CD8-positive, alpha-beta memory T cell (primary cell): ENCODE measurements at regions of chr10 and their contacts with region 1.

Region 1: GRCh38 chr10:6088721-6089390 is at the start of gene RBM17:
- DNase-seq: peak; percentile 93 to 99 (median 98)
- H3K4me3 ChIP-seq: peak within 1 kb of the TSS; percentile 91
- H3K4me3 Mint-ChIP-seq: peak within 1 kb of the TSS; percentile 85 to 96 (median 92)
- H3K27ac ChIP-seq: peak within 1 kb of the TSS; percentile 79
- H3K27ac Mint-ChIP-seq: peak within 1 kb of the TSS; percentile 67 to 94 (median 88)
- H3K4me1 ChIP-seq: peaks cover 50% of the 10 kb centered on the region
- H3K4me1 Mint-ChIP-seq: peaks cover 50 to 63% (median 58%) of the 10 kb centered on the region in 3 donors
- H3K27me3 ChIP-seq: no peaks in the 10 kb centered on the region
- H3K27me3 Mint-ChIP-seq: peaks cover 0 to 3% of the 10 kb centered on the region in 2 donors
- total RNA-seq, gene RBM17: 269 to 282 TPM

Region 2: GRCh38 chr10:5977471-5978229 is 111.2 kb before region 1 on chr10 and contains the start of gene IL15RA:
- CTCF ChIA-PET with region 1: interaction called, 11 read pairs
- POLR2A ChIA-PET with region 1: interaction called, 6 read pairs
- DNase-seq: peak; percentile 74 to 92 (median 80)
- H3K4me3 ChIP-seq: peak within 1 kb of the TSS; percentile 86
- H3K4me3 Mint-ChIP-seq: peak within 1 kb of the TSS; percentile 96 to 99 (median 98)
- H3K27ac ChIP-seq: peak within 1 kb of the TSS; percentile 89
- H3K27ac Mint-ChIP-seq: peak within 1 kb of the TSS; percentile 91 to 98 (median 96)
- H3K4me1 ChIP-seq: peaks cover 16% of the 10 kb centered on the region
- H3K4me1 Mint-ChIP-seq: peaks cover 24 to 45% (median 40%) of the 10 kb centered on the region in 3 donors
- H3K27me3 ChIP-seq: no peaks in the 10 kb centered on the region
- H3K27me3 Mint-ChIP-seq: no peaks in the 10 kb centered on the region
- total RNA-seq, gene IL15RA: 30.1 to 33.5 TPM

Region 3: DNA sequence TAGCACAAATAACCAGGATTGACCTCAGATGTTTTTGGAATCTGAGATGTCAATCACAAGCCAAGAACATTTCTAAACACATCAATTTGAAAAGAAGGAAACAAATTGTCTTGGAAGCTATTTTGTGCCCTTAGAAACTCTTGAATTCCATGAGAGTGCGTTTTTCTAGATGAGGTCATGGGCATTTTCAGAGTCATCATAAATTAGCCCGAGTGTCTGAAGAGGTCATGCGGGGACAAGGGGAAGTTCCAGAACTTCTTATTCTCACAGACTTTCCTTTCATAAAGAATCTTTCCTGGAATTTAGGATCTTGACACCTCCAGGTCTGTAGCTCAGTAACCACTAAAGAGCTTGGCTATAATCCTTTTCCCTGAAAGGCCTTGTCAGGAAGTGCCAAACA is 54.9 kb before region 1 on chr10:
- CTCF ChIA-PET with region 1: interaction called, 18 read pairs
- POLR2A ChIA-PET with region 1: interaction called, 5 read pairs
- DNase-seq: no peak
- H3K4me3 ChIP-seq: no peak overlapping the region
- H3K4me3 Mint-ChIP-seq: no peak overlapping the region
- H3K27ac ChIP-seq: peak overlapping the region; percentile 46
- H3K27ac Mint-ChIP-seq: no peak overlapping the region
- H3K4me1 ChIP-seq: peaks cover 32% of the 10 kb centered on the region
- H3K4me1 Mint-ChIP-seq: peaks cover 33 to 42% (median 39%) of the 10 kb centered on the region in 3 donors
- H3K27me3 ChIP-seq: no peaks in the 10 kb centered on the region
- H3K27me3 Mint-ChIP-seq: no peaks in the 10 kb centered on the region

Region 4: DNA sequence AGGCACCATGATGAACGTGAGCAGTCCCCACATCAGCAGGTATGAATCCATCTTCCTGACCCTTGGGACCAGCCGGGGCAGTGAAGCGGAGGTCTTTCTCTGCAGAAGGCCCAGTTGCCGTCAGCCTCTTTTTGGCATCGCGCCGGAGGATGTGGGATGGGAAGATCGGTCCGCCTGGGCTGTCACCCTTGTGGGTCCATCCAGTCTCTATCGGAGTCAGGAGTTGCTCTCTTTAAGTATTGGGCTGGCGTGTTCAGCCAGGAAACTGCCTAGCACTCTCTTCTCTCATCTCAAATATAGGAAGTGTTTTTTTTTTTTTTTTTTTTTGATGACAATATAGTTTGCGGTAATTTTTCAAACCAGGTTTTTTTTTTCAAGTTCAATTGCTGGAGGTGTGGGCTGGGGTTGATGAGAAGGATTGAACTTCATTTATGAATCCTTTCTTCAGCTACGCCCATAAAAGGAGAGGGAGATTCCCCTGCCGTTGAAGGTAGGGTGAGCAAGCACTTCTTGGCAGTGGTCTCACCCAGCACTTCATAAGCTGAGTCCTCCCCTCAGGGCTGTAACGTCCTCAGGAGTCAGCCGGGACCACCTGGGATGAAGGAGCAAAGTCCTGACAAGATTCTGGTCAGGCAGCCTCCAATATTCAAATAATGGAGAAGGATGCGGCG is 26.6 kb before region 1 on chr10 and contains the start of gene IL2RA:
- CTCF ChIA-PET with region 1: interaction called, 24 read pairs
- POLR2A ChIA-PET with region 1: no interaction called
- DNase-seq: peak; percentile 30 to 73 (median 65)
- H3K4me3 ChIP-seq: peak within 1 kb of the TSS; percentile 66
- H3K4me3 Mint-ChIP-seq: peak within 1 kb of the TSS; percentile 90 to 94 (median 92)
- H3K27ac ChIP-seq: peak within 1 kb of the TSS; percentile 32
- H3K27ac Mint-ChIP-seq: peak within 1 kb of the TSS; percentile 41 to 94 (median 88)
- H3K4me1 ChIP-seq: peaks cover 50% of the 10 kb centered on the region
- H3K4me1 Mint-ChIP-seq: peaks cover 47 to 81% (median 78%) of the 10 kb centered on the region in 3 donors
- H3K27me3 ChIP-seq: no peaks in the 10 kb centered on the region
- H3K27me3 Mint-ChIP-seq: peaks cover 0 to 8% of the 10 kb centered on the region in 2 donors
- total RNA-seq, gene IL2RA: 1,178 to 1,224 TPM

Region 5: GRCh38 chr10:6128087-6128486 is 39.2 kb after region 1 on chr10:
- CTCF ChIA-PET with region 1: no interaction called
- POLR2A ChIA-PET with region 1: no interaction called
- DNase-seq: no peak
- H3K4me3 ChIP-seq: no peak overlapping the region
- H3K4me3 Mint-ChIP-seq: no peak overlapping the region
- H3K27ac ChIP-seq: no peak overlapping the region
- H3K27ac Mint-ChIP-seq: peak overlapping the region in 2 of 8 donors; percentile 58 to 66
- H3K4me1 ChIP-seq: peaks cover 8% of the 10 kb centered on the region
- H3K4me1 Mint-ChIP-seq: peaks cover 16 to 22% (median 21%) of the 10 kb centered on the region in 3 donors
- H3K27me3 ChIP-seq: no peaks in the 10 kb centered on the region
- H3K27me3 Mint-ChIP-seq: peaks cover 4% of the 10 kb centered on the region in 2 donors

Region 6: DNA sequence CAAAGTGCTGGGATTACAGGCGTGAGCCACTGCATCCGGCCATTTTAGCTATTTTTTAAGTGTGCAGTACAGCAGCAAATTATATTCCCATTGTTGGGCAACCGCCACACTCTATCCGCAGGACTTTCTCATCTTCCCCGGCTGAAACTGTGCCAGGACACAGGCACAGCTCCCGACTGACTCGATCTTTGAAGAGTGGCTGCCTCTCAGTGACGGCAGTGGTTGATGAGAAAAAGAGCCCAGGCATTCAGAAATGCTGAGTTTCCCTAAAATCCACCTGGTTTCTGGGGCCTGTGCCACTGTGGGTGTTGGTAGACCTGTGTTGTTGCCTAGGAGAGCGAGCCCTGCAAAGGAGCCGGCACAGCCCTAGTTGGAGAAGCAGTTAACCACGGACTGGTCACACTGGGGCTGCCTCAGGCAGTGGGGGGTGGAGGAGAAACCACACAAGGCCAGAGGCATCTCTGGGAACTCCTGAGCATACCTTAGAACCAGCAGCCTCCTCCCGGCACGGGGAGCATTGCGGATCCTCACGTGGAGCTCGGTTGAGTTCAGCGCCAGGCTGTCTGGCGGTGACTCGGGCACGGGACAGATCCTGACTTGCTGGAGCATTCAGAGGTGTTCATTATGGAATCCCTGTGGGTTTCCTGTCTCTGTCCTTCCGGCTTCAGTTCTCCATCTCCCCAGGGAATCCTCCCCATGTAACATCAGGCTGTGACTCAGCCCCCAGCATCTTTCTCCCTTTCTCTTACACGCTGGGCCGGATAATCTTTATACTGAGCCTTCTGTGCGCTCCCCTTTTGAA is 130.0 kb after region 1 on chr10:
- CTCF ChIA-PET with region 1: no interaction called
- POLR2A ChIA-PET with region 1: no interaction called
- DNase-seq: no peak
- H3K4me3 ChIP-seq: no peak overlapping the region
- H3K4me3 Mint-ChIP-seq: no peak overlapping the region
- H3K27ac ChIP-seq: no peak overlapping the region
- H3K27ac Mint-ChIP-seq: no peak overlapping the region
- H3K4me1 ChIP-seq: no peaks in the 10 kb centered on the region
- H3K4me1 Mint-ChIP-seq: peaks cover under 1 to 4% (median 3%) of the 10 kb centered on the region in 3 donors
- H3K27me3 ChIP-seq: no peaks in the 10 kb centered on the region
- H3K27me3 Mint-ChIP-seq: no peaks in the 10 kb centered on the region

Region 7: DNA sequence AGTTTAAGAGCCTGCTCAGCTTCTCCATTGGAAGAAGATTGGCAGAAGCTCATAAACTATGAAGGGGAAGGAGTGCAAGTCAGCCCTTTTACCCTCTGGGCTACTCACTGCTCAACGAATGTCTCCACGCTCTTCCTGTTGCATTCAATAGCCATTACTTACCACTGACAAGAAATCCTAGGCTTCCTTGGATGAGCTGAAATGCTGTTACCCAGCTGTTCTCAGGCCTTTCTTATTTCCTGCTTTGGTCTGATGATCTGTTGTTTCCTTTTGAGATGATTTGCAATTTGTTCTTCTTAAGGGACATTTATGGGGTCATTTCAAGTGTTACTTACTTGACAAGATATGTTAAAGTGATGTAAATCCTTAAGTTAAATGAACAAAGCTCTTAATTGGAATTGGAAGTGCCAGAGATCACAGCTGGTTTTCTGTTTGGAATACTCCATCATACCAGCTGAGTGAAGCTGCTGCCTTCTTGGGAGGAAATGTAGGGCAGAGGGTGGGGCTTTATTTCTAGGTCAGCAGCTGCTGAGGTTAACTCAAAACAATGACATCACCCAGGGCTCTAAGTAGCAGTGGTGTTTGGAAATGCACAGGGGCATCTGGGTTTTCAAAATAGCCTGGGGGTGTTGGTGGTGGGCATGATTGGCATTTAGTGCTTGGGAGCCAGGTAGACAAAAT is 321.3 kb after region 1 on chr10:
- CTCF ChIA-PET with region 1: interaction called, 10 read pairs
- POLR2A ChIA-PET with region 1: no interaction called
- DNase-seq: peak; percentile 30 to 76 (median 47)
- H3K4me3 ChIP-seq: peak overlapping the region; percentile 16
- H3K4me3 Mint-ChIP-seq: peak overlapping the region; percentile 63 to 83 (median 79)
- H3K27ac ChIP-seq: peak overlapping the region; percentile 52
- H3K27ac Mint-ChIP-seq: peak overlapping the region; percentile 94 to 98 (median 96)
- H3K4me1 ChIP-seq: peaks cover 29% of the 10 kb centered on the region
- H3K4me1 Mint-ChIP-seq: peaks cover 26 to 50% (median 46%) of the 10 kb centered on the region in 3 donors
- H3K27me3 ChIP-seq: no peaks in the 10 kb centered on the region
- H3K27me3 Mint-ChIP-seq: peaks cover 0 to 1% of the 10 kb centered on the region in 2 donors